Mammary epithelial cell (primary cell): ENCODE measurements at regions of chr18 and their contacts with region 1.

Region 1: DNA sequence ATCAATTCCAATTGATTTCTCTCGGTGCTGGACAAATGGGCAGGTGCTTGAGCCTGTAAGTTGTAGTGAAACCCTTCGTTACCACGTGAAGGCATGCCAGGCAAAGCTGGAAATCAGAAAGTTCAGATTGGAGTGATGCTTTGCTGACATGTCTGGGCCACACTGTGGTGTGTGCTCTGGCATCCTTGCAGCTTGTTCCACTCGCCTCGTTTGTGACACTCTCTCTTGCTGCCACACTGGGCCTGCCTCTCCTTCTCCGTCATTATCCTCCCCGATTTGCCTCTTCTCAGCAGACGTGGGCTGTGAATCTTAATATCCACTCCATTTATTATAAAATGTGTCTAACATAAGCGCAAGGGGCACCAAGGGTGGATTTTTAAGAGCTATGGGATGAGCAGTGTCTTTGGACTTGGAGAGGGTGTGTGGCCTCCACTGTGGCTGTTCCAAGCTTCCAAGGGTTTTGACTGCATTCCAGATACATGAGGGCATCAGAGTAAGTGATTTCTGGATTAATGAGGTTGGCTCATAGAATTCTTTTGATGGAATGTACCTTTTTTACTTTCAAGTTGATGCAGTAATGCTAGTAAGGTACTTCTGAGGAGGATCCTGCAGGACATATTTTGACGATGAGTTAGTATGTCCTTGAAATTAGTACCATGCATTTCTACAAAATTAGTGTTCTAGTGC is 238.8 kb downstream of the TPGS2 start:
- DNase-seq: peak; percentile 77
- H3K4me3 ChIP-seq: no peak overlapping the region
- H3K27ac ChIP-seq: peak overlapping the region; percentile 96
- H3K4me1 ChIP-seq: peaks cover 59% of the 10 kb centered on the region
- H3K27me3 ChIP-seq: no peaks in the 10 kb centered on the region
- CTCF ChIP-seq: no peak

Region 2: DNA sequence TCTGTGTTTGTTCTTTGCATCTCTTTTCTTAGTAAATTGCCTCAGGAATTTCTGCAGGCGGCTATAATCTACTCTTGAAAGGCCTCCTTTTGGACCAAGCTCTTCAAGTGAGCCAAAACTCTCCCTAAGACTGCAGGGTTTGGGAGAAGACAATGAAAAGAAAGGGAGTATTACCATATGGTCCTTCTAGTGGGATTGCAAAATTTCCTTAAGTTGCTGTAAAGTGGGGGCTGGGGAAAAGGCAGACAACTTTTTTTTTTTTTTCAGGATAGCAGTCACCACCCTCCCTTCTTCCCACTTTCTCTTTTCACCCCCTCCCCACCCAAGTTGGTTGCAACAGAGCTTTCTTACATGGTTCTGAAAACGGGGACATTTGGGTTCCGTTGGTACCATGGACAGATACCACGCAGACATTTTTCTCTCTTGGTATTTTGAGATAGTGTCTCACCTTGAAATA is 108.8 kb before region 1 on chr18:
- CTCF ChIA-PET with region 1: no interaction called
- dilution Hi-C with region 1: no loop called
- in situ Hi-C with region 1: no loop called
- intact Hi-C with region 1: loop called (anchors 5 kb)
- DNase-seq: no peak
- H3K4me3 ChIP-seq: no peak overlapping the region
- H3K27ac ChIP-seq: no peak overlapping the region
- H3K4me1 ChIP-seq: peaks cover 11% of the 10 kb centered on the region
- H3K27me3 ChIP-seq: no peaks in the 10 kb centered on the region
- CTCF ChIP-seq: no peak

Region 3: DNA sequence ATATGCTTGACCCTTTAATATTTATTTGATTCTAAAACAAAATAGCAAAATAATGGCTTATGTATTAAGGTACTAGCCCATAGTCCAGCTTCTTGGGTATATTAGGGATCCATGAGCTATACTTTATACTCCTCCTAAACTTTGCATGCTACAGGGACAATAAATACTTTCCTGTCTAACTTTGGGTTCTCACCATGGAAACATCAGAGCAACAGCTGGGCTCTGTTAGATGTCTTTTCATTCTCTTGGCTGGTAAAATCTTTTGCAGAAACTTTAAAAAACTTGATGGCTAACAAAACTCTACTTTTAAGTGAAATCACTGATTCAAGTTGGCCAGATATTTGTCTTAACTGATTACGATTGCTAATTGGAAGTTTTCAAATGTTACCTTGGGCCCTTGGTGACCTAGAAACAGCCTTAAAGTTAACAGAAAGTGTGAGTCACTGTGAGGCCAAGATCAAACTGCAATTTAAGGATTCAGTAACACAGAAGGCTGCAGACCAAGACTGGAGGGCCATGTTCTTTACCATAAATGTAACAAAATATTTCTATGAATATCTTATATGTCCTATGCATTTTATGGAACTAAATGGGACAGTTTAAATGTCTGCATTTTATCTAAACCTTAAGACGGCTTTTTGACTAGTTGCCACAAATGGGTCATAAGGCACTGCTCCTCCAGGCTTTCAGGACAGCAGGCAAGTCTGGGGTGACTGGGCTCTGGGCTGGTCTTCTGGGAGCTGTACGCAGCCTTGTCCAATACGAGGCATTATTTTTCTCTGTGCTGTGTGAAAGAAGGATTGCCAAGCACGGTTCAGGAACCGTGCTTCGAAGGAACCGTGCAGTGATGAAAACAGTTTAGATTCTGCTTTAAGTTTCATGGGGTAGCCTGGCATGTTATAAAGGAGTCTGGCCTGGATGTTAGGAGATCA is 50.3 kb after region 1 on chr18:
- CTCF ChIA-PET with region 1: no interaction called
- dilution Hi-C with region 1: loop called (anchors 10 kb)
- in situ Hi-C with region 1: no loop called
- intact Hi-C with region 1: no loop called
- DNase-seq: no peak
- H3K4me3 ChIP-seq: no peak overlapping the region
- H3K27ac ChIP-seq: no peak overlapping the region
- H3K4me1 ChIP-seq: peaks cover 3% of the 10 kb centered on the region
- H3K27me3 ChIP-seq: no peaks in the 10 kb centered on the region
- CTCF ChIP-seq: no peak

Region 4: GRCh38 chr18:36769611-36770314 is 179.8 kb after region 1 on chr18:
- CTCF ChIA-PET with region 1: no interaction called
- dilution Hi-C with region 1: no loop called
- in situ Hi-C with region 1: no loop called
- intact Hi-C with region 1: no loop called
- DNase-seq: no peak
- H3K4me3 ChIP-seq: no peak overlapping the region
- H3K27ac ChIP-seq: no peak overlapping the region
- H3K4me1 ChIP-seq: peaks cover 3% of the 10 kb centered on the region
- H3K27me3 ChIP-seq: no peaks in the 10 kb centered on the region
- CTCF ChIP-seq: peak; percentile 36 to 37